Heart left ventricle (tissue), 16 donors: ENCODE measurements at regions of chr2 and their contacts with region 1.

Region 1: DNA sequence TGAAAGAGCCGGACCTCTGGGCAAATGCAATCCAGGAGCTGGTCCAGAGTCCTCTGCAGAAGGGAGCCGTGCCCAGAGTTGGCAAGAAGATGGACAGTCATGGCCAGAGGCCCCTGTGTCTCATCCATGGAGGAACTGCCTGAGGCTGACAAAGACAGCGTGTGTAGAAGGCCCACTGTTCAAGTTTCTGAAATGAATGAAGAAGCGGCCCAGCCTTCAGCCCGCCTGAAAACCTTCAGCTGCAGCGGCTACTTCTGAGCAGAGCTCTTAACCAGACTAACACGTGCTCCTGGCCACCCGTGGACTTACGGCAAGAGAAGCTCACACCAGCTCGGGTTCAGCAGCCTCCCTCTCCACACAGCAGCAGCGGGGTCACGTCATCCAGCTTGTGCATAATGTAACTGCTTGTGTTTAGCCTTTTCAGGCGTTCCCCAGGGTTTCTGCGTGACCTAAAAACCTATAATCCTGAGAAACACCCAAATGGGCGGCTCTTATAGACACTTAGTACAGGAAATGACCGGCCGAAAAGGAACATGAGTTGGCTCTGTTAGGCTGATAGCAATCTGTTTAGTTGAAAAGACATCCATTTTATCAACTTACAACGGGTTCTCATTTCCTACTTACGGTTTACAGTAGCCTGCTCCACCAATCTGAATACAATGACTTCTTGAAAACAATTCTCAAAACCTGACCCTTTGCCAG is at the start of gene FAM124B:
- DNase-seq: peak; percentile 64 to 86 (median 77)
- ATAC-seq: peak; percentile 86 to 94 (median 92)
- H3K4me3 ChIP-seq: peak within 1 kb of the TSS; percentile 11 to 66 (median 52)
- H3K27ac ChIP-seq: peak within 1 kb of the TSS; percentile 25 to 87 (median 74)
- H3K4me1 ChIP-seq: peaks cover 0 to 29% (median 8%) of the 10 kb centered on the region in 12 donors
- H3K27me3 ChIP-seq: no peaks in the 10 kb centered on the region
- CTCF ChIP-seq: no peak
- POLR2A ChIP-seq: peak in 1 of 2 donors; percentile 50
- total RNA-seq, gene FAM124B: 0.77 to 5.1 (median 1.6) TPM

Region 2: DNA sequence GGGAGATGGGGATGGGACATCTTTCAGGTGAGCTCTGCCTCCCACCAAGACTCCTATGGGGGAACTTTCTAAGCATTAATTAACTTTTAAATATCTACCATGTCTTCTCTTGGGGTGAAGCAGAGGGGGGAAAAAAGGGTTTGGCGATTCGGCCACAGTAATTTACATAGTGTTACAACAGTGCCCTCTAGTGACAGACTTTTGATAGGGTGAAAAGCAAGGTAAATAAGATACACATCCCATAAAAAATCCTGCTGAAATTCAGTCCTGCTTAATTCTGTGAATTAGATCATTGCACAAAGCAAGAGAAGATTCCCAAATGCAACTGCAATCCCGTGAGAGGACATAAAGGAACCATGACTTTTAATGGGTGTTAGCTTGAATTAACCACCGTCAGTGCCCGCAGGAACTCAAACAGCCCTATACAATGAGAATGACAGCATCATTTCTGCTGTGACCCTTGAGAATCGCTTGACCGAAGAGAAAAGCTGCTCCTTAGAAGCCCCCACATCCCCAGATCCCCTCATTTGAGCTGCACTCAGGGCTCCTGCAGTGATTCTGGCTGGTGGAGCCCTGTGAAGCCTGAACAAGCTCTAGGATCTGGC is 32.7 kb before region 1 on chr2:
- intact Hi-C with region 1: loop called in 1 of 10 experiments (anchors 5 kb)
- DNase-seq: no peak
- ATAC-seq: peak in 1 of 4 donors; percentile 39
- H3K4me3 ChIP-seq: no peak overlapping the region
- H3K27ac ChIP-seq: no peak overlapping the region
- H3K4me1 ChIP-seq: no peaks in the 10 kb centered on the region
- H3K27me3 ChIP-seq: no peaks in the 10 kb centered on the region
- CTCF ChIP-seq: peak; percentile 51 to 81 (median 65)
- POLR2A ChIP-seq: no peak

Region 3: GRCh38 chr2:224442071-224442967 is 40.5 kb after region 1 on chr2:
- intact Hi-C with region 1: loop called in 1 of 10 experiments (anchors 5 kb)
- DNase-seq: peak in 3 of 5 donors; percentile 28 to 62 (median 32)
- ATAC-seq: peak in 2 of 4 donors; percentile 38 to 59
- H3K4me3 ChIP-seq: peak overlapping the region; percentile 38 to 69 (median 55)
- H3K27ac ChIP-seq: peak overlapping the region in 1 of 12 donors; percentile 24
- H3K4me1 ChIP-seq: peaks cover 0 to 12% (median 0%) of the 10 kb centered on the region in 12 donors
- H3K27me3 ChIP-seq: peaks cover 0 to 19% (median 2%) of the 10 kb centered on the region in 9 donors
- CTCF ChIP-seq: no peak
- POLR2A ChIP-seq: no peak